ENCODE measurements at regions of chr1 and their contacts with region 1.

Region 1: DNA sequence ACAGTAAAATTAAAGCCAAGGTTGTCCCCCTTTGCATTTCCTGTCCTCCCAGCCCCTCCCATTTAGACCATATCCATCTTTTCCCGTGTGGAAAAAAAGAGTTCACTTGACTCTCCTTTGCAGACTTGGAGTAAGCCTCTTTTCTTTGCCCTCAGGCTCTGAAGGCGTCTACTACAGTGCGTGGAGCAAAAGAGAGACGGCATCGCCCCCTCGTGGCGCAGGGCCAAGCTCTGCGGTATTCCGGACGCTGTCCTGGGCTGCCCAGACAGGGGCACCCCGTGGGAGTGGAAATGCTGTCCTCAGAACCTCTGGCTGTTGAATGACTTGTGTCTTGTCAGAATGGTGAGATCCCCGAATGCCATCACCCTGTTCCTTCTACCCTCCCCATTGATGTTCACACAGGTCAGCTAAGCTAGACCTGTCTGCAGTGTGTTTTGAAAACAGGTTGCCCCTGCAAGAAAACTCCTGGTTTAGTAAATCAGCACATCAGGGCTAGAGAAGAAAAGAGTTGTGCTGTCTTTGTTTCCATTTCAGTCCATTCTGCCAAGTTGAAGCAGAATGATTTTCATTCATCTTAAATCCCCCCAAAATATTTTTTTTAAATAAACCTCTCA is 12.3 kb upstream of the GJA8 start:
- DNase-seq: peak; percentile 64 to 83 (median 70)
- ATAC-seq: peak; percentile 100
- H3K4me3 ChIP-seq: no peak overlapping the region
- H3K27ac ChIP-seq: no peak overlapping the region
- H3K4me1 ChIP-seq: no peaks in the 10 kb centered on the region
- H3K27me3 ChIP-seq: peaks cover 2 to 6% of the 10 kb centered on the region in 2 experiments; a peak in 4 of 5 replicates
- CTCF ChIP-seq: peak; percentile 89 to 94 (median 89)
- EP300 ChIP-seq: no peak
- POLR2A ChIP-seq: no peak
- RAD21 ChIP-seq: peak; percentile 81 to 98

Region 2: DNA sequence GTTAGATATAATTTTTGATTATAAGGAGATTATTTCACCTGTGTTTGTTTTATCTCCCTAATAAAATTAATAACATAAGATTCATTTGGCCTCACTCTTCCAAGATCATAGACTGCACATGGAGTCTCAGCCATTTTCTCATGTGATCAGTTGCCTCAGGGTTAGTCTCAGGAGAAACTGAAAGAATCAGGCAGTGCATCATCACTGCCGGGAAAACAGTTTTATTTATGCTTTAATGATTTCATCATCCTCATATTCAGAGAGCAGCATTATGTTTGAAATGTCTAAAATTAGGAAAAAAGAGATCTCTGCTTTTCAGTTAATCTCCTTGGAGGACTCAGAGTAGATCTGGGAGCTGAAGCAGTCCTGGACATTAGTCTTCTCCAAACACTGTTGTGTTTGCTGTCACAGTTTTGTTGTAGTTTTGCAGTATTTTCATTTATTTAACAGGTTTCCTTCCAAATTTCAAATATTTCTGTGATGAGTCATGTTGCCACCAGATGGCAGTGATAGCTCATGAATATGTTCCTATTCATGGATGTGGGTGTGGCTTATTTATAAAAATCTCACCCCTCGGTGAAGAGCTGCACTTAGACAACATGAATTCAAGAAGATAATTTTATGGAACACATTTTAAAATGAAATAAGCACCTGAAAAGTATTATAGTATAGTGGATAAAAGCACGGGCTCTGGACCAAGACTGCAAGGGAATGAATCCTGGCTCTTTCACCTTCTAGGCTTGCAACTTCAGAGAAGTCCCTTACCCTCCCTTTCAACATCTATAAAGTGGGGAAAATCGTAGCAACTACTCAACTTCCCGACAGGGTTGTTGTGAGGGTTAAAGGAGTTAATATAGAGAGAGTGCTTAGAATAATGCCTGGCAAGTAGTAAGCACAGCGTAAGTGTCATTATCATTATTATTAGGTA is 616.6 kb before region 1 on chr1:
- CTCF ChIA-PET with region 1: interaction called, 4 read pairs
- POLR2A ChIA-PET with region 1: no interaction called
- in situ Hi-C with region 1: loop called (anchors 10 kb)
- intact Hi-C with region 1: loop called (anchors 2 kb)
- DNase-seq: peak; percentile 70 to 72 (median 72)
- ATAC-seq: peak; percentile 86
- H3K4me3 ChIP-seq: no peak overlapping the region
- H3K27ac ChIP-seq: no peak overlapping the region
- H3K4me1 ChIP-seq: peaks cover 0 to 2% of the 10 kb centered on the region in 2 experiments; a peak in 2 of 5 replicates
- H3K27me3 ChIP-seq: no peaks in the 10 kb centered on the region
- CTCF ChIP-seq: peak; percentile 49 to 76 (median 62); a peak in 5 of 6 replicates
- EP300 ChIP-seq: no peak
- POLR2A ChIP-seq: no peak
- RAD21 ChIP-seq: peak; percentile 84 to 88

Region 3: DNA sequence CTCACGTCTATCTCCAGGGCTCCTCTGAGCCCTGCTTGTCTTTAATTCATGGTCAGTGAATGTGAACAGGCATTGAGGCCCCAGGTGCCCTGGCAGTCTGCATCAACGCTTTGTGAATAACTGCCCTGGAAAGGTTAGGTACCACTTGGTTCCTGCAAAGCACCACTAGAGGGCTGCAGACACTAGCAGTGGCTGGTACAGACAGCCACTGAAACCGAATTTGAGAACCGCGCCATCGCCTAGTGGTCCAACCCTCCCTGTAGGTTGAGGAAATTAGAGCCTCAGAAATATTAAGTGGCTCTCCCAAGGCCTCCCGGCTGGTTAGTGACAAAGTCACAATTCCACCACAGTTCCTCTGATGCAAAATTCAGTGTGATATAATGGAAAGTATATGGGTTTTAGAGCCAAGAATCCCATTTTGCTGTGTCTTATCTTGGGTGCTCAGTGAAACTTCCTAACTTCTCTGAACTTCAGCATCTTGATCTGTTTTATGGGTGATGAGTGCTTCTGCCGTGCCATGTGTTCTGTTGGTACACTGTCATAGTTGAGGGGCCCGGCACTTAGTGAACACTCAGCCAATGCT is 395.2 kb before region 1 on chr1:
- CTCF ChIA-PET with region 1: interaction called, 6 read pairs
- POLR2A ChIA-PET with region 1: no interaction called
- in situ Hi-C with region 1: no loop called
- intact Hi-C with region 1: loop called (anchors 5 kb)
- DNase-seq: peak; percentile 47 to 70 (median 54)
- ATAC-seq: peak; percentile 96
- H3K4me3 ChIP-seq: no peak overlapping the region
- H3K27ac ChIP-seq: no peak overlapping the region
- H3K4me1 ChIP-seq: no peaks in the 10 kb centered on the region
- H3K27me3 ChIP-seq: peaks cover 2 to 13% of the 10 kb centered on the region in 2 experiments; a peak in 3 of 5 replicates
- CTCF ChIP-seq: peak; percentile 80 to 92 (median 92)
- EP300 ChIP-seq: no peak
- POLR2A ChIP-seq: no peak
- RAD21 ChIP-seq: peak; percentile 86 to 90

Region 4: GRCh38 chr1:147640553-147641165 is 249.6 kb before region 1 on chr1:
- CTCF ChIA-PET with region 1: interaction called, 5 read pairs
- POLR2A ChIA-PET with region 1: interaction called, 4 read pairs
- in situ Hi-C with region 1: loop called (anchors 5 kb)
- intact Hi-C with region 1: loop called (anchors 5 kb)
- DNase-seq: peak; percentile 78 to 83 (median 80)
- ATAC-seq: peak; percentile 100
- H3K4me3 ChIP-seq: no peak overlapping the region
- H3K27ac ChIP-seq: no peak overlapping the region
- H3K4me1 ChIP-seq: peaks cover 0 to 12% of the 10 kb centered on the region in 2 experiments; a peak in 2 of 5 replicates
- H3K27me3 ChIP-seq: 0 out of 5 replicates have a peak, but pooled peaks cover 0 to 2% of the 10 kb centered on the region in 2 experiments
- CTCF ChIP-seq: peak; percentile 83 to 90 (median 83)
- EP300 ChIP-seq: no peak
- POLR2A ChIP-seq: no peak
- RAD21 ChIP-seq: peak; percentile 44 to 61; a peak in 3 of 4 replicates

Region 5: DNA sequence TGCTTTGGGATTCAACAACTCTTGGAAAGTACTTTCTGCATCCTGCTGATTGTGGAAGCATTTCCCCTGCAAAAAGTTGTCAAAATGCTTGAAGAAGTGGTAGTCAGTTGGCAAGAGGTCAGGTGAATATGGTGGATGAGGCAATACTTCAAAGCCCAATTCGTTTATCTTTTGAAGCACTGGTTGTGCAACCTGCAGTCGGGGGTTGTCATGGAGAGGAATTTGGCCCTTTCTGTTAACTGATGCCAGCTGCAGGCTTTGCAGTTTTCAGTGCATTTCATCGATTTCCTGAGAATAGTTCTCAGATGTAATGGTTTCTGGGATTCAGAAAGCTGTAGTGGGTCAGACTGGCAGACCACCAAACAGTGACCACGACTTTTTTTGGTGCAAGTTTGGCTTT is 82.3 kb before region 1 on chr1:
- CTCF ChIA-PET with region 1: no interaction called
- POLR2A ChIA-PET with region 1: no interaction called
- in situ Hi-C with region 1: no loop called
- intact Hi-C with region 1: no loop called
- DNase-seq: no peak
- ATAC-seq: no peak
- H3K4me3 ChIP-seq: no peak overlapping the region
- H3K27ac ChIP-seq: no peak overlapping the region
- H3K4me1 ChIP-seq: no peaks in the 10 kb centered on the region
- H3K27me3 ChIP-seq: peaks cover 4 to 13% of the 10 kb centered on the region in 2 experiments; a peak in 3 of 5 replicates
- CTCF ChIP-seq: no peak
- EP300 ChIP-seq: no peak
- POLR2A ChIP-seq: no peak
- RAD21 ChIP-seq: no peak

Region 6: GRCh38 chr1:147840907-147841306 is 49.4 kb before region 1 on chr1:
- CTCF ChIA-PET with region 1: no interaction called
- POLR2A ChIA-PET with region 1: no interaction called
- in situ Hi-C with region 1: loop called (anchors 5 kb)
- intact Hi-C with region 1: loop called (anchors 2 kb)
- DNase-seq: peak; percentile 41 to 66 (median 52)
- ATAC-seq: peak; percentile 97
- H3K4me3 ChIP-seq: no peak overlapping the region
- H3K27ac ChIP-seq: no peak overlapping the region
- H3K4me1 ChIP-seq: no peaks in the 10 kb centered on the region; a peak in 2 of 5 replicates
- H3K27me3 ChIP-seq: peaks cover 3 to 17% of the 10 kb centered on the region in 2 experiments; a peak in 2 of 5 replicates
- CTCF ChIP-seq: peak; percentile 70 to 77 (median 76)
- EP300 ChIP-seq: no peak
- POLR2A ChIP-seq: no peak
- RAD21 ChIP-seq: peak; percentile 52 to 85

Region 7: GRCh38 chr1:147902183-147902845 is 12.0 kb after region 1 on chr1 and contains the start of gene GJA8:
- CTCF ChIA-PET with region 1: no interaction called
- POLR2A ChIA-PET with region 1: no interaction called
- in situ Hi-C with region 1: no loop called
- intact Hi-C with region 1: no loop called
- DNase-seq: no peak
- ATAC-seq: no peak
- H3K4me3 ChIP-seq: no peak within 1 kb of the TSS
- H3K27ac ChIP-seq: no peak within 1 kb of the TSS
- H3K4me1 ChIP-seq: no peaks in the 10 kb centered on the region
- H3K27me3 ChIP-seq: peaks cover 3 to 25% of the 10 kb centered on the region in 2 experiments; a peak in 3 of 5 replicates
- CTCF ChIP-seq: no peak
- EP300 ChIP-seq: no peak
- POLR2A ChIP-seq: no peak
- RAD21 ChIP-seq: no peak
- polyA plus RNA-seq, gene GJA8: not detected

Measured in K562 (cell line).